Activated B cell treated with CpG ODN at 0.5 μM for 24 hours (primary cell): ENCODE measurements at regions of chr20 and their contacts with region 1.

Region 1: GRCh38 chr20:16761305-16761829 is 13.2 kb downstream of the OTOR start:
- DNase-seq: no peak
- ATAC-seq: peak; percentile 71
- H3K4me3 Mint-ChIP-seq: no peak overlapping the region
- H3K27ac Mint-ChIP-seq: no peak overlapping the region
- H3K4me1 Mint-ChIP-seq: no peaks in the 10 kb centered on the region
- H3K27me3 Mint-ChIP-seq: peaks cover 27% of the 10 kb centered on the region
- CTCF ChIP-seq: peak; percentile 40

Region 2: DNA sequence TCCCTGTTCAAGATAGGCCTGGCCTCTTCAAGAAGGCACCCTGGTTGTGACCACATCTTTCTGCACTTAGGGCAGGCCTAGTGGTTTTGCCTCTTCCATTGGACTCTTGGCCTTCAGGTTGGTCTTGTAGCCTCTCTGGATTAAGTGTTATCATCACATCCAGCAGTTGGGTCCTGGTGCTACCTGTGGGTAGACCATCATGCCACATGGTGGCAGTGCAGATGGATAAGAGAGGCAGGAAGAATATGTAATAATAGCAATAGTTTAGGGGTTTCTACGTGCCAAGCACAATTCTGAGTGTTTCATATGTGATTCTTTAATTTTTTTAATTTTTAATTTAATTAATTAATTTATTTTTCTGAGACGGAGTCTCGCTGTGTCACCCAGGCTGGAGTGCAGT is 60.1 kb before region 1 on chr20:
- CTCF ChIA-PET with region 1: no interaction called
- POLR2A ChIA-PET with region 1: no interaction called
- intact Hi-C with region 1: loop called (anchors 1 kb)
- DNase-seq: no peak
- ATAC-seq: no peak
- H3K4me3 Mint-ChIP-seq: no peak overlapping the region
- H3K27ac Mint-ChIP-seq: no peak overlapping the region
- H3K4me1 Mint-ChIP-seq: no peaks in the 10 kb centered on the region
- H3K27me3 Mint-ChIP-seq: peaks cover 33% of the 10 kb centered on the region
- CTCF ChIP-seq: no peak